ENCODE measurements at regions of chr17 and their contacts with region 1.

Region 1: DNA sequence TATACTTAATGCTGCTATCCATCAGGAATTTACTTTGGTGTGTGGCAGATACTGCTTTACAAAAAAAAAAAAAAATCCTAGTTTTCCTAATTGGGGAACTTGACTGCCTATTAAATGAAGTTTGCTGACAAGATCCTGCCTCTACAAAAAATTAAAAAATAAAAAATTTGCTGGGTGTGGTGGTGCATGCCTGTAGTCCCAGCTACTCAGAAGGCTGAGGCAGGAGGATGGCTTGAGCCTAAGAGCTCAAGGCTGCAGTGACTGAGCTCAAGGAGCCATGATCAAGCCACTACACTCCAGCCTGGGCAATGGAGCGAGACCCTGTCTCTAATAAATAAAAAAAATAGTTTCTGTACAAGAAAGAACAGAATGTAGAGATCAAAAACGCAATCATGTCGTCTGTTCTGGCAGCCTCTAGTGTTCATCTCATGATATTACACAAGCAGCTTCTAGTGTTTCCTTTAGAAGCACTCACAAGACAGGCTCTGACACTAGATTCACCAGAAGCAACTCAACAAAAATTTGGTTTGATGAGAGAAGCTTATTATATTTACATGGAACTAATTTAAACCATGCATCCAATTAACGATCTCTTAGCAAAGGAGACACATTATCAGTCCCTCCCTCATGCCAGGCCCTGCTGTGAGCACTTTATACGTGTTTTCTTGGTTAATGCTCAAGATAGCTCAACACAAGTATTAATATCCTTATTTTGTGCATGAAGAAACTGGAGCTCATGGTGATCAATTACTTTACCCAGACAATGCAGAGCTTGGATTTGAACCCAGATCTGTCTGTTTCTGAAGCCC is 6.8 kb upstream of the KRTAP17-1 start:
- DNase-seq: peak; percentile 65
- ATAC-seq: peak; percentile 68; the same call in 1 of the 2 replicates
- H3K4me3 ChIP-seq: no peak overlapping the region
- H3K27ac ChIP-seq: no peak overlapping the region
- H3K4me1 ChIP-seq: no peaks in the 10 kb centered on the region
- H3K27me3 ChIP-seq: no peaks in the 10 kb centered on the region
- CTCF ChIP-seq: peak; percentile 69

Region 2: GRCh38 chr17:40803617-40804082 is 518.6 kb before region 1 on chr17:
- CTCF ChIA-PET with region 1: no interaction called
- POLR2A ChIA-PET with region 1: no interaction called
- intact Hi-C with region 1: loop called (anchors 10 kb)
- DNase-seq: peak; percentile 82
- ATAC-seq: peak; percentile 85
- H3K4me3 ChIP-seq: no peak overlapping the region
- H3K27ac ChIP-seq: peak overlapping the region; percentile 31; the same call in 1 of the 2 replicates
- H3K4me1 ChIP-seq: peaks cover 8% of the 10 kb centered on the region
- H3K27me3 ChIP-seq: no peaks in the 10 kb centered on the region
- CTCF ChIP-seq: peak; percentile 86

Region 3: DNA sequence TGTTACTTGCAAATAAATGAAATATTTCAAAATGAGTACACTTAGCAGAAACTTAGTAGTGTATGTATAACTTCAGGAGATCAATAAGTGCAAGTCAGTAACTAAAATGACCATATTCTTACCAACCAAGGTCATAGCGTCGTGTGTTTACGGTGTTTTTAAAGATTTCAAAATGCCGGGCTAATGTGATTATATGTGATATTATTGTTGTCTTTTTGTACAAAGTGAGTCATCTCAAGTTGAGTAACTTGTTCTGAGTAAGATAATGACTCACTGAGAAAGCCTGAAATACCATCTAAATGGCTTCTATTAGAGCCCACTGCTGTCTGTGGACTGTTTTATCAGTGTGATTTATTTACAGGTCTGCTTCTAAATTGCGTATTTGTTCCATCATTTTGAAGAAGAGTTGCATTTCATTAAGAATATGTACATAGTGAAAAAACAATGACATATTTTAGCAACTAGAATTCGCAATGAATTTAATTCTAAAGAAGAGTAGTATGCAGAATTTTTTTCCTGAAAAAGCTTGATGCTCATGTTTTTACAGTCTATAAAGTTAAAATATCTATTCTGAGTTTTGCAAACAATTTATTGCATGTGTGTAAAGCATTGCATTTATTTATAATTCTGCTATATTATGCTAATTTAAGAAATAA is 468.0 kb before region 1 on chr17:
- CTCF ChIA-PET with region 1: interaction called, 3 read pairs
- POLR2A ChIA-PET with region 1: no interaction called
- intact Hi-C with region 1: loop called (anchors 1 kb)
- DNase-seq: peak; percentile 84
- ATAC-seq: peak; percentile 81
- H3K4me3 ChIP-seq: no peak overlapping the region
- H3K27ac ChIP-seq: peak overlapping the region; percentile 64
- H3K4me1 ChIP-seq: peaks cover 51% of the 10 kb centered on the region
- H3K27me3 ChIP-seq: no peaks in the 10 kb centered on the region
- CTCF ChIP-seq: no peak

Region 4: GRCh38 chr17:41060052-41060604 is 262.2 kb before region 1 on chr17 and contains the start of gene KRTAP2-3:
- CTCF ChIA-PET with region 1: no interaction called
- POLR2A ChIA-PET with region 1: no interaction called
- intact Hi-C with region 1: loop called (anchors 2 kb)
- DNase-seq: peak; percentile 86
- ATAC-seq: peak; percentile 48
- H3K4me3 ChIP-seq: no peak within 1 kb of the TSS
- H3K27ac ChIP-seq: peak within 1 kb of the TSS; percentile 94
- H3K4me1 ChIP-seq: peaks cover 67% of the 10 kb centered on the region
- H3K27me3 ChIP-seq: no peaks in the 10 kb centered on the region
- CTCF ChIP-seq: no peak
- total RNA-seq, gene KRTAP2-3: 10.8 and 12.4 TPM in 2 replicates

Region 5: DNA sequence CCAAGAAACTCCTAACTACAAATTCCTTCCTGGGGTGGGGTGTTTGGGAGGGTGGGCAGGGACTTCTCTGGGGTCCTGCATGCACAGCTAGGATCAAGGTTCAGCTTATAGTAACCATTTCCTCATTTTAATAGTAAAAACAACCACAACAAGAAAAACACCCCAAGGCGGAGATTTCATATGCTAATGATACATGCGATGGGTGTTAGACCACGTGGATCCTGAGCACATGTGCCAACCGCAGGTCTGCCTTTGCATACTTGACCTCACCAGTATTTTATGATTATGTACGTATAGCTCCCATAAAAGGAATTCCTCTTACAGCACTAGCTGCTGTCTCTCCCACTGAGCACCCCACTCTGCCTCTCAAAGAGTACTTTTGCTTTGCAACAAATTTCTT is 206.0 kb before region 1 on chr17:
- CTCF ChIA-PET with region 1: no interaction called
- POLR2A ChIA-PET with region 1: no interaction called
- intact Hi-C with region 1: no loop called
- DNase-seq: no peak
- ATAC-seq: no peak
- H3K4me3 ChIP-seq: no peak overlapping the region
- H3K27ac ChIP-seq: no peak overlapping the region
- H3K4me1 ChIP-seq: peaks cover 10% of the 10 kb centered on the region
- H3K27me3 ChIP-seq: no peaks in the 10 kb centered on the region
- CTCF ChIP-seq: no peak

Region 6: GRCh38 chr17:41264599-41264998 is 57.7 kb before region 1 on chr17:
- CTCF ChIA-PET with region 1: no interaction called
- POLR2A ChIA-PET with region 1: no interaction called
- intact Hi-C with region 1: no loop called
- DNase-seq: no peak
- ATAC-seq: no peak
- H3K4me3 ChIP-seq: no peak overlapping the region
- H3K27ac ChIP-seq: no peak overlapping the region
- H3K4me1 ChIP-seq: no peaks in the 10 kb centered on the region
- H3K27me3 ChIP-seq: no peaks in the 10 kb centered on the region
- CTCF ChIP-seq: no peak

Region 7: GRCh38 chr17:41496820-41497408 is 174.6 kb after region 1 on chr17:
- CTCF ChIA-PET with region 1: no interaction called
- POLR2A ChIA-PET with region 1: no interaction called
- intact Hi-C with region 1: loop called (anchors 10 kb)
- DNase-seq: peak; percentile 84
- ATAC-seq: peak; percentile 77
- H3K4me3 ChIP-seq: no peak overlapping the region
- H3K27ac ChIP-seq: peak overlapping the region; percentile 29
- H3K4me1 ChIP-seq: peaks cover 41% of the 10 kb centered on the region
- H3K27me3 ChIP-seq: no peaks in the 10 kb centered on the region
- CTCF ChIP-seq: peak; percentile 86

Measured in PC-3 (cell line).